Uterus (tissue), 4 donors: ENCODE measurements at regions of chrX and their contacts with region 1.

Region 1: DNA sequence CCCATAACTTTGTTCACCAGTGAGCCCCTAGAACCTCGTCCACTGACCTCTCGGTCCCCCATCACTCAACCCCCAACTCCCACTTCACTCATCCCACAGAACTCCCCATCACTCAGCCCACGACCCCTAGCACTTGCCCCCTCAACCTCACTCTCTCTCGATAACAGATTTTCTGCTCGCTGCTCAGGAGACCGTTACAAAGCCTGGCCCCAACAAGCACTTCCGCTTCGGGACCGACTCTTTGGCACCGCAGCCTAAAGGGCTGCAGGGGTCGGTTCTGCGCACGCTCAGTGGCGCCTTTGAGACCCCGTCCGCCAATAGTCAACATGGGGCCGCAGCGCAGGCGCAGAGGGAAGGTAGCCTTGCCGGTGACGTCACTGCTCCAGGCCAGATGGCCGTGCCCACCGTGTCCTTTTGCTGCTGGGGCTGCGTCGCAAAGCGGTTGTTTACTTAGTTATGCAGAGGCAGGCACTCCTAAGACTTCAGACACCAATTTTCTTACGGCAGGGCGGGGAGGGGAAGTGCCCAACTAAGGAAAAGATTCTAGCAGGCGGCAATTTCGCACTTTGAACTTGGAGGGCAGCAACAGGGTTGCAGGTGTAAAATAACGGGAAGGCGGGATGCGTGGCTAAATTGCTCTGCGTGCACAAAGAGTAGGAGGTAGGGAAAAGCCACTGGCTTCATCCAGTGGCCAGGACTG is at the start of gene ZNF182:
- DNase-seq: peak; percentile 92 to 93
- H3K4me3 ChIP-seq: peak within 1 kb of the TSS; percentile 48 to 60
- H3K27ac ChIP-seq: peak within 1 kb of the TSS; percentile 72 to 74
- H3K4me1 ChIP-seq: no peaks in the 10 kb centered on the region
- H3K27me3 ChIP-seq: no peaks in the 10 kb centered on the region
- CTCF ChIP-seq: no peak
- POLR2A ChIP-seq: peak; percentile 57 to 61
- total RNA-seq, gene ZNF182: 3.2 to 8.4 (median 5.0) TPM

Region 2: GRCh38 chrX:47849778-47850177 is 154.1 kb before region 1 on chrX:
- intact Hi-C with region 1: loop called (anchors 10 kb)
- DNase-seq: no peak
- H3K4me3 ChIP-seq: no peak overlapping the region
- H3K27ac ChIP-seq: no peak overlapping the region
- H3K4me1 ChIP-seq: no peaks in the 10 kb centered on the region
- H3K27me3 ChIP-seq: no peaks in the 10 kb centered on the region
- CTCF ChIP-seq: no peak
- POLR2A ChIP-seq: no peak